CD4-positive, alpha-beta T cell (primary cell): ENCODE measurements at regions of chr11 and their contacts with region 1.

Region 1: GRCh38 chr11:72793425-72794367 is at the start of gene STARD10:
- DNase-seq: peak; percentile 91 to 98 (median 94)
- ATAC-seq: peak; percentile 90
- H3K4me3 ChIP-seq: peak within 1 kb of the TSS; percentile 82
- H3K4me3 Mint-ChIP-seq: peak within 1 kb of the TSS; percentile 99
- H3K27ac ChIP-seq: peak within 1 kb of the TSS; percentile 99
- H3K27ac Mint-ChIP-seq: peak within 1 kb of the TSS; percentile 99
- H3K4me1 ChIP-seq: peaks cover 23% of the 10 kb centered on the region
- H3K4me1 Mint-ChIP-seq: peaks cover 29% of the 10 kb centered on the region
- H3K27me3 ChIP-seq: no peaks in the 10 kb centered on the region
- H3K27me3 Mint-ChIP-seq: no peaks in the 10 kb centered on the region
- CTCF ChIP-seq: peak; percentile 98
- total RNA-seq, gene STARD10: 10.5 to 12.9 TPM

Region 2: GRCh38 chr11:72112321-72113219 is 681.1 kb before region 1 on chr11 and contains the start of gene ANAPC15:
- CTCF ChIA-PET with region 1: no interaction called
- POLR2A ChIA-PET with region 1: no interaction called
- intact Hi-C with region 1: loop called in 1 of 2 experiments (anchors 10 kb)
- DNase-seq: peak; percentile 93 to 99 (median 97)
- ATAC-seq: peak; percentile 84
- H3K4me3 ChIP-seq: peak within 1 kb of the TSS; percentile 68
- H3K4me3 Mint-ChIP-seq: peak within 1 kb of the TSS; percentile 93
- H3K27ac ChIP-seq: peak within 1 kb of the TSS; percentile 97 to 98
- H3K27ac Mint-ChIP-seq: peak within 1 kb of the TSS; percentile 98
- H3K4me1 ChIP-seq: peaks cover 17% of the 10 kb centered on the region
- H3K4me1 Mint-ChIP-seq: peaks cover 19% of the 10 kb centered on the region
- H3K27me3 ChIP-seq: no peaks in the 10 kb centered on the region
- H3K27me3 Mint-ChIP-seq: no peaks in the 10 kb centered on the region
- CTCF ChIP-seq: no peak
- total RNA-seq, gene ANAPC15: 48.8 to 52.5 TPM

Region 3: DNA sequence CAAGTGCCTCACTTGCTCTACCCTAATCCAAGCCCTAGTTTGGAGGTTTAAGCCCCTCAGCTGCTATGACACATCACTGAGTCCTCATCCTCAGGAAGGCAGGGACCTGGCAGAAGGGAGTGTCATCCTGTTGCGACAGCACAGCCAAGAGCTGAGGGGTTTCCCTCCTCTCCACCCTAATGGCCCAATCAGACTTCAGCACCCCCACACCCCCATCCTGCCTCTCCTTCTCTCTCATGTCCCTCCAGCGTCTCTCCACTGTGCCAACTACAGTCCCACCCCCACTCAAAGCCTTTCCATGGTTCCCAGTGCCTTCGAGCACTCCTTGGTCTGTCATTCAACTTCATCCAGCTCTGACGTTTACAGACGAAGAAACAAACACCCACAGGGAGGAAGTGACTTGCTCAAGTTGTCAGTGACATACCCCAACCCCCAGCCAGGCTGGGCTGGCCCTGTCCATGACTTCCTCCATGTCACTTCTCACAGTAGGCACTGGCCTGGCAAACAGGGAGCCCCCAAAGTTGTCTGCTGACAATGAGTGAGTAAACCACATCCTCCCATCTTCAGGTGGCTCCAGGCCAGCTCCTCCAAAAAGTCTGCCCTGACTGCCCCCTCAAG is 57.1 kb before region 1 on chr11:
- CTCF ChIA-PET with region 1: interaction called, 9 read pairs
- POLR2A ChIA-PET with region 1: interaction called, 7 read pairs
- intact Hi-C with region 1: loop called in 1 of 2 experiments (anchors 2 kb)
- DNase-seq: peak; percentile 37 to 91 (median 59)
- ATAC-seq: peak; percentile 88
- H3K4me3 ChIP-seq: no peak overlapping the region
- H3K4me3 Mint-ChIP-seq: peak overlapping the region; percentile 36
- H3K27ac ChIP-seq: peak overlapping the region; percentile 51 to 83
- H3K27ac Mint-ChIP-seq: peak overlapping the region; percentile 95
- H3K4me1 ChIP-seq: peaks cover 59% of the 10 kb centered on the region
- H3K4me1 Mint-ChIP-seq: peaks cover 53% of the 10 kb centered on the region
- H3K27me3 ChIP-seq: no peaks in the 10 kb centered on the region
- H3K27me3 Mint-ChIP-seq: no peaks in the 10 kb centered on the region
- CTCF ChIP-seq: no peak

Region 4: GRCh38 chr11:72752088-72752914 is 41.4 kb before region 1 on chr11 and contains the start of gene ARAP1:
- CTCF ChIA-PET with region 1: no interaction called
- POLR2A ChIA-PET with region 1: no interaction called
- intact Hi-C with region 1: loop called (anchors 1 to 5 kb)
- DNase-seq: peak; percentile 65 to 92 (median 80)
- ATAC-seq: peak; percentile 90
- H3K4me3 ChIP-seq: peak within 1 kb of the TSS; percentile 96
- H3K4me3 Mint-ChIP-seq: peak within 1 kb of the TSS; percentile 96
- H3K27ac ChIP-seq: peak within 1 kb of the TSS; percentile 45 to 53
- H3K27ac Mint-ChIP-seq: peak within 1 kb of the TSS; percentile 86
- H3K4me1 ChIP-seq: peaks cover 47% of the 10 kb centered on the region
- H3K4me1 Mint-ChIP-seq: peaks cover 57% of the 10 kb centered on the region
- H3K27me3 ChIP-seq: no peaks in the 10 kb centered on the region
- H3K27me3 Mint-ChIP-seq: no peaks in the 10 kb centered on the region
- CTCF ChIP-seq: no peak
- total RNA-seq, gene ARAP1: 65.7 to 69.8 TPM

Region 5: DNA sequence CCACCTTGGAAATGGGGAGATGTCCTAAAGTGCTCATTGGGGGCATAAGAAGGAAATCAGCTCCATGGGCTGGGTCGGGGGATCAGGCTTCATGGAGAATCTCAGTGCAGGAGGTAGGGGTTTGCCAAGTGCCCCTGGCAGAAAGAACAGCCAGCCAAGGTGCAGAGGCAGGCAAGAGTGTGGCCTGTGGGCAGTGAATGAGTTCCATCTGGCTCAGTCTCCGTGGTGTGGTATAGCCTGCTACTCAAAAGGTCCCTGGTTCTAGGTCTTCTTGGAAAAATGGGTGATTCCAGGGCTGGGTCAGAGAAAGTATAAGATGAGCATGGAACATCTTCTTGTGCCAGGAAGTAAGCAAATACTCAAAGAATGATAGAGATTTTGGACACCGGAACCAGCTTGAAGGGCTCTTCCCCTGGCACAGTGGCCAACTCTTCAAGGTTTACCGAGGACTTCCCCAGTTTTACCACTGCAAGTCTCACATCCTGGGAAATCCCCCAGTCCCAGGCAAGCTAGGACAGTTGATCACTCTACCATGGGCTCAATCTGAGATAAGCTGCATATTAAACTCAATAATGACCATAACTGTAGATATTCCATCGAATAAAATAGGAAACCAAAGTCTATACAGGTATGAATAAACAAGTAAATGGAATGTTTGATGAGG is 30.9 kb before region 1 on chr11:
- CTCF ChIA-PET with region 1: no interaction called
- POLR2A ChIA-PET with region 1: no interaction called
- intact Hi-C with region 1: no loop called
- DNase-seq: peak in 2 of 14 experiments; percentile 54 to 63
- ATAC-seq: no peak
- H3K4me3 ChIP-seq: no peak overlapping the region
- H3K4me3 Mint-ChIP-seq: no peak overlapping the region
- H3K27ac ChIP-seq: no peak overlapping the region
- H3K27ac Mint-ChIP-seq: no peak overlapping the region
- H3K4me1 ChIP-seq: peaks cover 7% of the 10 kb centered on the region
- H3K4me1 Mint-ChIP-seq: no peaks in the 10 kb centered on the region
- H3K27me3 ChIP-seq: no peaks in the 10 kb centered on the region
- H3K27me3 Mint-ChIP-seq: no peaks in the 10 kb centered on the region
- CTCF ChIP-seq: no peak

Region 6: DNA sequence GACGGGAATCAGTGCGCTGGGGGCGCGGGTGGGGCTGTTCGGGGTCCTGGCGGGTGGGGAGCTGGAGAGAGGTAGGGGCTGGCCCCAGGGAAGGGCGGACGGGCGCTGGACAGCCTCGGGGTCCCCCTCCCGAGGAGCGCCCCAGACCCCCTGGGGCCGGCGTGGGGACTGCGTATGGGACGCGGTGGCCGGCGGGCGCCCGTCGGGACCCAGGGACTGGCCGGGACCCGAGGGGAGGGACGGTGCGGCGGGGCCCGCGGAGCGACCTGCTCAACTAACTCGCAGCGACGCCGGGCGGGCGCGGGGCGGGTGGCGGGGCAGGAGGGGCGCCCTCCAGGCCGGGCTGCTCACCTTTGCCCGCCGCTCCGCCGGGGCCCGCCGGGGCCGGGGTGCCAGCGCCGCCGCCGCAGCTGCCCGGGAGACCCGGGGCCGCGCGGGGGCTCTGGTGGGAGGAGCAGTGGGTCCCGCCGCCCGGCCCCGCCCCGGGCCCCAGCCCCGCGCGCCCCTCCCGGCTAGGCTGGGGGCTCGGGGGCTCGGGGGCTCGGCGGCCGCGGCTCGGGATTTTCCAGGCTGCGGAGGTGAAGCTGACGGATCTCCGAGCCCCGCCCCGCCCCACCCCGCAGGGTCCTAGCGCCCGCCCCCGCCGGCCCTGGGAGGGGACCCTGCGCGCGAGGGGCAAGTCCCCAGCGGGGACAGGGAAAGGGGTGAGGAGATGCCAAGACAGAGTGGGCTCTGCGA is 12.2 kb before region 1 on chr11:
- CTCF ChIA-PET with region 1: interaction called, 11 read pairs
- POLR2A ChIA-PET with region 1: interaction called, 8 read pairs
- intact Hi-C with region 1: no loop called
- DNase-seq: peak; percentile 22 to 87 (median 50)
- ATAC-seq: peak; percentile 81
- H3K4me3 ChIP-seq: peak overlapping the region; percentile 55
- H3K4me3 Mint-ChIP-seq: peak overlapping the region; percentile 90
- H3K27ac ChIP-seq: peak overlapping the region in 1 of 2 donors; percentile 17
- H3K27ac Mint-ChIP-seq: peak overlapping the region; percentile 45
- H3K4me1 ChIP-seq: peaks cover 45% of the 10 kb centered on the region
- H3K4me1 Mint-ChIP-seq: peaks cover 24% of the 10 kb centered on the region
- H3K27me3 ChIP-seq: no peaks in the 10 kb centered on the region
- H3K27me3 Mint-ChIP-seq: no peaks in the 10 kb centered on the region
- CTCF ChIP-seq: no peak

Region 7: GRCh38 chr11:72814286-72815109 is 20.8 kb after region 1 on chr11 and contains the start of gene ATG16L2:
- CTCF ChIA-PET with region 1: interaction called, 23 read pairs
- POLR2A ChIA-PET with region 1: interaction called, 13 read pairs
- intact Hi-C with region 1: loop called (anchors 1 kb)
- DNase-seq: peak in 13 of 14 experiments; percentile 78 to 95 (median 87)
- ATAC-seq: peak; percentile 81
- H3K4me3 ChIP-seq: peak within 1 kb of the TSS; percentile 96
- H3K4me3 Mint-ChIP-seq: peak within 1 kb of the TSS; percentile 99
- H3K27ac ChIP-seq: peak within 1 kb of the TSS; percentile 97 to 100
- H3K27ac Mint-ChIP-seq: peak within 1 kb of the TSS; percentile 97
- H3K4me1 ChIP-seq: peaks cover 38% of the 10 kb centered on the region
- H3K4me1 Mint-ChIP-seq: peaks cover 57% of the 10 kb centered on the region
- H3K27me3 ChIP-seq: no peaks in the 10 kb centered on the region
- H3K27me3 Mint-ChIP-seq: no peaks in the 10 kb centered on the region
- CTCF ChIP-seq: peak; percentile 29
- total RNA-seq, gene ATG16L2: 58.3 to 61.6 TPM

Region 8: DNA sequence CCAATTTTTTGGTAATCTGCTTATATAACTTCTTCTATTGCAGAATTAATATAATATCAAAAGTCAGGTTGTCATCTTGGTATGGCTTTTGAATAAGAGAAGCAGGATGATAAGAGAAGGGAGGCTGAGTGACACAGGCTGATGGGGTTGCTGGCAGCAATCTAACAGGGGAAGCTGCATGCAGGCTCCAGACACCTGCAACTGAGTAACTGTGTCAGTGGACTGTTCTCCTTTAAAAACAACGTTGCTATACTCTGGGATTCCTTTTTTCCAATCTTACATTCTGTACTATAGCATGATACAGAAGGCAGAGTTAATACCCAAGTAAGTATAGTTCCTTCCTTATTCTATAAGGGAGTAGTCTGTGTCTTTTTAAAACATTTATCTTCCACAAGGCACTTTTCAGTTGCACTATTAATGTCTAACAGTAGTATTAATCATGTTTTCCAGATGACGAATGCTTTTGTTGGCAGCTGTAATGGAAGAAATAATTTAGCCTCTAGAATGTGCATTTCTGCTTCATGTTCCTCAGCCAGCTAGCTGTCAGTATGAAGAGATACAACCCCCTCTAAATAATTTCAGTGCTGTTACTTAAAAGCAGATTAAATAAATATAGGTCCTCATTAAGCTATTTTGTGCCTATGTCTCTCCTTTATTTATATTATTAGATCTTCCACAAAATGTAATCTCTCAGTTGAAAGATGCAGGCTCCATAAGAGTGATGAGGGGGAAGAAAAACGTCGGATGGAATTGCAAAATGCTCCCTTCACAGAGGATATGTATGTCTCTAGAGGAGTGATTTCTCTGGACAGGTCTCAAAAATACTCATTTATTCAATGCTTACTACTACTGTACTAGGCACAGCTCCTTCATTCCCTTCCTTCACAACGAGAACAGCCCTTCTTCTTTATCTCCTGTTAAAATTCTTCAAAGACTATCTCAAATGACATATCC is 71.3 kb after region 1 on chr11:
- CTCF ChIA-PET with region 1: no interaction called
- POLR2A ChIA-PET with region 1: no interaction called
- intact Hi-C with region 1: no loop called
- DNase-seq: no peak
- ATAC-seq: no peak
- H3K4me3 ChIP-seq: no peak overlapping the region
- H3K4me3 Mint-ChIP-seq: no peak overlapping the region
- H3K27ac ChIP-seq: no peak overlapping the region
- H3K27ac Mint-ChIP-seq: no peak overlapping the region
- H3K4me1 ChIP-seq: peaks cover 3% of the 10 kb centered on the region
- H3K4me1 Mint-ChIP-seq: peaks cover 18% of the 10 kb centered on the region
- H3K27me3 ChIP-seq: no peaks in the 10 kb centered on the region
- H3K27me3 Mint-ChIP-seq: no peaks in the 10 kb centered on the region
- CTCF ChIP-seq: no peak